ENCODE measurements at regions of chr9 and their contacts with region 1.

Region 1: DNA sequence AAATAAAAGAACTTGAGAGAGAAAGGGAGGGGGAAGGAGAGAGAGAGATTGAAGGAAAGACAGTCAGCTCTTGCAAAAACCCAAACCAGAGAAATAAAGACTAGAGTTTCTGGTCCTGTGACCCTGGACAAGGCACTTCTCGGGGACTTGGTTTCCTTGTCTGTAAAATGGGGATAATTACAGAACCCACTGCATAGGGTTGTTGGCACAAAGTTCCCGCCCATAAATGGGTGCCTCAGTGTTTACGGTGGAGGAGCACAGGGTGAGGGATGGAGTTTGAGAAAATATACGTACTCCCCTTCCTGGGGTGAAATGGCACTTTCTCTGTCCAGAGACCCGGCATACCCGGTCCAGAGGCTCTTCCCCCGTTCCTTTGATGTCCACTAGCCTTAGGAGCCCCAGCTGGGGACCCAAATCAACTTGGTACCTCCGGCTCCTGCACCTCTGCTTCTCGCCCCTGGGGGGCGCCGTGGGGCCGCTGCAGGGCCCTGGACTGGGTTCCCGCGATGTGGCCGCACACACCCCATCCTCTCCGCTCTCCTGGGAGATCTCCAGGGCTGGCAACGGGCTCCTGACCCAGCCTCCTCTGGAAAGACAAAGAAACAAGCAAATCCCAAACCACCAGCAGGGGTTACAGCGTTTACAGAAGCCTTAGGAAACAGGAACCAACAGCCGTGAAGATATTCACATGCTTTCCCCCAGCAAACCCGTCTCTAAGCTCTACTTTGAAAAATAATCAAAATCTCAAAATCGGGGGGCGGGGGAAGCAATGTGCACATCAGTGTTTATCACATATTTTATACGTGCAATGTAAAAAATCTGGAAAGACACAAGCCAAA is 26.3 kb downstream of the PTGES start:
- DNase-seq: peak; percentile 88 to 98 (median 96)
- ATAC-seq: peak; percentile 97
- H3K4me3 ChIP-seq: no peak overlapping the region
- H3K27ac ChIP-seq: no peak overlapping the region
- H3K4me1 ChIP-seq: peaks cover 0 to 20% of the 10 kb centered on the region in 2 experiments; a peak in 2 of 5 replicates
- H3K27me3 ChIP-seq: peaks cover 15 to 37% of the 10 kb centered on the region in 2 experiments
- CTCF ChIP-seq: peak; percentile 97 to 100 (median 98)
- EP300 ChIP-seq: no peak
- POLR2A ChIP-seq: no peak
- RAD21 ChIP-seq: peak; percentile 97 to 99

Region 2: DNA sequence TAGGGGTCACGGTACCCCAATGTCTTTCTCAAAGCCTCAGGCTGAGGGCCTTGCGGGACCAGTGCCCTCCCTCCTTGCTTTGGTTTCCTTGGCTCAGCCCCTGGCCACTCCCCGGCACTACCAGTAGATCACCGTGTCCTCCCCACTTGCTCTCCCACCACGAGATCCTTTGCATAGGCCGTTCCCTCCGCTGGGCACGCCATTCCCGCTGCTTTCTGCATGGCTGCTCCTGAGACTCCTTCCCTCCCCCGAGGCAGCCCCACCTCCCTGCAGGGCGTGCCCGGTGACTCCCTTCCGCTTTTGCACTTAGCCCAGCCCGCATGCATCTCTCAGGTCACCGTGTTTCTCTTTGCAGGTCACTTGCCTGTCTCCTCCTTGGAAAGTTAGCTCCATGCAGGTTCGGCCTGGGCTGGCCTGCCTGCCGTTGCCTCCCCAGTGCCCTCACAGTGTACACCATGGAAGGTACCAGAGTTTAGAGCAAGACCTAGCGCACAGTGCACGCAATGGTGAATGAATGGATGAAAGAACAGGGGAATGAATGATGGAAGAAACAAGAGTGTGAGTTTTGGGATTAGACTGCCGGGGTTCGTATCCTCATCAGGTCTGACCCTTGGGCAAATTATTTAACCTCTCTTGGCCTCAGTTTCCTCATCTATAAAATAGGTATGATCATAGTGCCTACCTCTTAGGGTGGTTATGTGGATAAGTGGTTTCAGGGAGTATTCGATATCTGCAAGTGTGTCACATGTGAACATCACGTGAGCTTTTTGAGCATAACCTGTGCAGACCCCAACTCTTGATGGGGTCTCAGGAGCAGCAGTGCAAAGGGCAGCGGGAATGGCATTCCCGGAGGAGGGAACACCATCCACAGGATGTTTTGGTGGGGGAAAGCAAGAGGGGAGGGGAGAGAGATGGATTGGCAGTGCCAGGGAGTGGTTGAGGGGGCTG is 320.0 kb before region 1 on chr9:
- CTCF ChIA-PET with region 1: no interaction called
- POLR2A ChIA-PET with region 1: no interaction called
- in situ Hi-C with region 1: no loop called
- intact Hi-C with region 1: no loop called
- DNase-seq: peak; percentile 94 to 96 (median 94)
- ATAC-seq: peak; percentile 97
- H3K4me3 ChIP-seq: peak overlapping the region; percentile 31
- H3K27ac ChIP-seq: peak overlapping the region; percentile 79
- H3K4me1 ChIP-seq: peaks cover 57 to 75% of the 10 kb centered on the region in 2 experiments
- H3K27me3 ChIP-seq: no peaks in the 10 kb centered on the region
- CTCF ChIP-seq: 0 out of 6 replicates have a peak, but pooled peaks of 1 of the 3 experiments have one; percentile 4
- EP300 ChIP-seq: peak; percentile 57
- POLR2A ChIP-seq: peak; percentile 86
- RAD21 ChIP-seq: 0 out of 4 replicates have a peak, but pooled peaks of 1 of the 2 experiments have one; percentile 7

Region 3: DNA sequence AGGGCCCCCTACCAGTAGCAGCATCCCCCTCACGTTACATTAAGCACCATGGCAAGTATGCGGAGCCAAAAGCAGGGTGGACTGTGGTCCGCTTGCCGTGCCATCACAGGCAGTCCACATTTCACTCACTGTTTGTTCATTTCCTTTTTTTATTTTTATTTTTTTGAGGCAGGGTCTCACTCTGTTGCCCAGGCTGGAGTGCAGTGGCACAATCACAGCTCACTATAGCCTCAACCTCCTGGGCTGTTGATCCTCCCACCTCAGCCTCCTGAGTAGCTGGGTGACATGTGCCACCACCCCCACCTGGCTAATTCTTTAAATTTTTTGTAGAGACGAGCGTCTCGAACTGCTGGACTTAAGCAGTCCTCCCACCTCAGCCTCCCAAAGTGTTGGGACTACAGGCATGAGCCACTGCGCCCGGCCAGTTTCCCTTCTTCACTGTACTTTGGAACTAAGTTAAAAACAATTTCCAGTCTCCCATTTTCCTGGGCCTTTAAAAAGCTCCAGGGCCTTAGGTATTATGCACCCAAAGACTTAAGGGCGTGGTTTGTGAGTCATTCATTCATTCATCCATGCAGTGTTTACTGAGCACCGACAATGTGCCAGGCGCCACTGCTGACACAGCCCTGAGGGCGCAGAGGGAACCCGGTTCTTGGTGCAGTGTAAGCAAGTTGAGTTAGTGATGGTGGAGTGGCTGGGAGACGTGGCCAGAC is 41.2 kb before region 1 on chr9:
- CTCF ChIA-PET with region 1: no interaction called
- POLR2A ChIA-PET with region 1: no interaction called
- in situ Hi-C with region 1: no loop called
- intact Hi-C with region 1: no loop called
- DNase-seq: no peak
- ATAC-seq: no peak
- H3K4me3 ChIP-seq: no peak overlapping the region
- H3K27ac ChIP-seq: no peak overlapping the region
- H3K4me1 ChIP-seq: peaks cover 0 to 30% of the 10 kb centered on the region in 2 experiments; a peak in 3 of 5 replicates
- H3K27me3 ChIP-seq: peaks cover 22 to 49% of the 10 kb centered on the region in 2 experiments; a peak in 4 of 5 replicates
- CTCF ChIP-seq: no peak
- EP300 ChIP-seq: no peak
- POLR2A ChIP-seq: no peak
- RAD21 ChIP-seq: no peak

Region 4: DNA sequence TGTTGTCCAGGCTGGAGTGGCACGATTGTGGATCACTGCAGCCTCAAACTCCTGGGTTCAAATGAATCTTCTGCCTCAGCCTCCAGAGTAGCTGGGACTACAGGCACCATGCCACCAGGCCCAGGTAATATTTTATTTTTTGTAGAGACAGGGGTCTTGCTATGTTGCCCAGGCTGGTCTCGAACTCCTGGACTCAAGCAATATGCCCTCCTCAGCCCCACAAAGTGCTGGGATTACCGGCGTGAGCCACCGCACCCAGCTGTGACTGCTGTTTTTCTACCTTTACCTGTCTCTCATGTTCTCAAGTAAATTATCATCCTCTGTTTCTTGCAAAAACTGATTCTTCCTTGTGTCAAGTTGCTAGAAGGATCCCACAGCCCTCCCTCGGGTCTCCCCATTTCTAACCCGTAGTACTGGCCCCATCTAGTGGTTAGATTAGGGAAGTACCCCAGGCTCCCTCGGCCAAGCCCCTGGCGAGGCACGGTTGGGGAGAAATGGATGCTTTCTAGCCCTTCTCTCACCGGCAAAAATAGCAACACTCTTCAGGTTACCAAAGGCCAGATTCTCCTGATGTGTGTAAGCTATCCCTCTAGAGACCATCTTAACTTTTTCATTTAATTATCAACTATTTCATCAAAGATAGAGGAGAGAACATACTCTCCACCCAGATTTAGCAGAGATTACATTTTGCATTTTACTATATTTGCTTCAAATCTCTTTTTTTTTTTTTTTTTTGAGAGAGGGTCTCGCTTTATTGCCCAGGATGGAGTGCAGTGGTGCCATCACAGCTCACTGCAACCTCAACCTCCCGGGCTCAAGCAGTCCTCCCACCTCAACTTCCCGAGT is 57.2 kb after region 1 on chr9:
- CTCF ChIA-PET with region 1: interaction called, 46 read pairs
- POLR2A ChIA-PET with region 1: interaction called, 4 read pairs
- in situ Hi-C with region 1: no loop called
- intact Hi-C with region 1: loop called (anchors 2 kb)
- DNase-seq: peak; percentile 89 to 97 (median 96)
- ATAC-seq: peak; percentile 97
- H3K4me3 ChIP-seq: no peak overlapping the region
- H3K27ac ChIP-seq: no peak overlapping the region
- H3K4me1 ChIP-seq: peaks cover 8 to 15% of the 10 kb centered on the region in 2 experiments; a peak in 3 of 5 replicates
- H3K27me3 ChIP-seq: no peaks in the 10 kb centered on the region; a peak in 1 of 5 replicates
- CTCF ChIP-seq: peak; percentile 97 to 99 (median 99)
- EP300 ChIP-seq: no peak; the same call in 1 of the 2 replicates
- POLR2A ChIP-seq: no peak
- RAD21 ChIP-seq: peak; percentile 100

Region 5: GRCh38 chr9:129796029-129796910 is 69.7 kb after region 1 on chr9:
- CTCF ChIA-PET with region 1: no interaction called
- POLR2A ChIA-PET with region 1: interaction called, 3 read pairs
- in situ Hi-C with region 1: no loop called
- intact Hi-C with region 1: loop called (anchors 2 kb)
- DNase-seq: peak in 1 of 4 experiments; percentile 9
- ATAC-seq: no peak
- H3K4me3 ChIP-seq: no peak overlapping the region
- H3K27ac ChIP-seq: no peak overlapping the region
- H3K4me1 ChIP-seq: no peaks in the 10 kb centered on the region
- H3K27me3 ChIP-seq: peaks cover 35 to 43% of the 10 kb centered on the region in 2 experiments
- CTCF ChIP-seq: no peak
- EP300 ChIP-seq: no peak
- POLR2A ChIP-seq: no peak
- RAD21 ChIP-seq: no peak